CD8-positive, alpha-beta memory T cell (primary cell): ENCODE measurements at regions of chr4 and their contacts with region 1.

Region 1: DNA sequence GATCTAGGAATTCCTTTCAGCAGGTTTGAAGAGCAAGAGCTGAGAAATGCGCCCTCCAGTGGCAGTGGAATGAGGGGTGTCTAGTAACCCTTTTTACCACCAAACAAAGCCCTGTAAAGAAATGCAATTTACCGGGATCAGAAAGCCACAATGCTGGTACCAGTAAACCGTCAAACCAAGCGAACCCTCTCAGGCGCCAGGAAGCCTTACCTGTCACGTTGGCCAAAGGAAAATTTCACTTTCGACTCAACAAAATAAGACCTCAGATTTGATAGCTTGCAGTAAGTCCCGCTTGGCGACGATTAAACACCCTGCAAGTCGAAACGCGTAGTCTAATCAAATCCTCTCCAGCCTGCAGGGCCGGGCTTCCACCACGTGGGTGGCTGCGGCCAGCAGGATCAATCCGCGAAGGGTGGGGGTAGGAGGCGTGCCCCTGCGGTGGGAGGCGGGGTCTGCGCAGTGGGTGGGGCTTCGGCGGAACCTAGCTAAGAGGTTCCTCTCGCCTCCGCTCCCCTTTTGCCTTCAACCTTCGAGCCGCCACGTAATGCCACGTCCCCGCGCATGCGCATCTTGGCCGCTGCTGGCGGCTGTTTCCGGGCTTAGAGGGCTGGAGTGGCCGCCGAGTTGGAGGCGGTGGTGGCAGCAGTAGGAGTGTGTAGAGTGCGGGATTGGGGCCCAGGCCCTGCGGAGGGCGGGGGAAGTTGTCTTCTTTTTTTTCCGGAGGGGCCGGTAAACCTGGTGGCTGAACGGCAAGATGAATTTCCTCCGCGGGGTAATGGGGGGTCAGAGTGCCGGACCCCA is at the start of gene USO1:
- DNase-seq: peak; percentile 98 to 100 (median 99)
- H3K4me3 ChIP-seq: peak within 1 kb of the TSS; percentile 69
- H3K4me3 Mint-ChIP-seq: peak within 1 kb of the TSS; percentile 93 to 100 (median 98)
- H3K27ac ChIP-seq: peak within 1 kb of the TSS; percentile 94
- H3K27ac Mint-ChIP-seq: peak within 1 kb of the TSS; percentile 92 to 100 (median 98)
- H3K4me1 ChIP-seq: peaks cover 37% of the 10 kb centered on the region
- H3K4me1 Mint-ChIP-seq: peaks cover 48 to 68% (median 61%) of the 10 kb centered on the region in 3 donors
- H3K27me3 ChIP-seq: no peaks in the 10 kb centered on the region
- H3K27me3 Mint-ChIP-seq: peaks cover 0 to 4% of the 10 kb centered on the region in 2 donors
- total RNA-seq, gene USO1: 39.9 to 41.5 TPM

Region 2: DNA sequence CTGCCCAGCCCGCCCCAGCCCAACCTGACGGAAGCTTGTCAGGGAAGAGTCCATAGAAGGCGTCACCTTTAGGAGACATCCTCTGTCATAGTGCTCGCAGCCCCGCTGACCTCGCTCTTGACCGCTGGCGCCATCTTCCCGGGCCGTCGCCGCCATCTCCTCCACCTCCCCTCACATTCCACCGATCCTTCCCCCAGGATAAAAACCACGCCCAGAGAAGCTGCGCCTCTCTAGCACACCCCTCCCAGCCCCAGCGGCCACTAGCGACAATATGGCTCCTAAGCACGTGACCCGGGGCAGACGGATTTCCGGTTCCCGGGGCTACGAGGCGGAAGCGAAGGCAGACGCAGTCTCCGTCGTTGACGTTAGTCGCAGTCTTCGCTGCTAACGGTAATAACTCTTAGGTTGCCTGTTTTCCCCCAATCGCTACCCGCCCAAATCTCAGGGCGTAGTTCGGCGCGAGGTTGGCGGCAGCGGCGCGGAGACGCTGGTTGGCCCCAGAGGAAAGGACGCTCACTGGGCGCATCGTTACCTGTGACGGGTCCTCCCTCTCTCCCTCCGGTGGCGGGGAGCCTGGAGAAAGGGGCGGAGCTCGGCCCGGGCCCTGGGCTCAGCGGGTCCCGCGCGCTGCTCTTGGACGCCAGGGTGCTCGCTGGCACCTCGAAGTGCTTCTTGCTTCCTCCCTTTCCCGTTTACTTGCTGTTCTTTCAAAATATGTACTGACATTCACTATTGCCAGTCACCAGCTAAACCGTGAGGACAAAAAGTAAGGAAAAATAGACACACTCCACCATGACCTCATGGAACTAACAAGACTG is 209.9 kb before region 1 on chr4 and contains the starts of genes RCHY1 and THAP6:
- CTCF ChIA-PET with region 1: interaction called, 10 read pairs
- POLR2A ChIA-PET with region 1: interaction called, 12 read pairs
- DNase-seq: peak; percentile 91 to 95 (median 94)
- H3K4me3 ChIP-seq: peak within 1 kb of the TSS; percentile 92
- H3K4me3 Mint-ChIP-seq: no peak within 1 kb of the TSS
- H3K27ac ChIP-seq: peak within 1 kb of the TSS; percentile 91
- H3K27ac Mint-ChIP-seq: peak within 1 kb of the TSS in 2 of 8 donors; percentile 98 to 100
- H3K4me1 ChIP-seq: peaks cover 68% of the 10 kb centered on the region
- H3K4me1 Mint-ChIP-seq: peaks cover 44 to 51% (median 49%) of the 10 kb centered on the region in 3 donors
- H3K27me3 ChIP-seq: no peaks in the 10 kb centered on the region
- H3K27me3 Mint-ChIP-seq: peaks cover 0 to 1% of the 10 kb centered on the region in 2 donors
- total RNA-seq, gene RCHY1: 27.9 to 31.7 TPM
- total RNA-seq, gene THAP6: 22.7 to 23.2 TPM

Region 3: DNA sequence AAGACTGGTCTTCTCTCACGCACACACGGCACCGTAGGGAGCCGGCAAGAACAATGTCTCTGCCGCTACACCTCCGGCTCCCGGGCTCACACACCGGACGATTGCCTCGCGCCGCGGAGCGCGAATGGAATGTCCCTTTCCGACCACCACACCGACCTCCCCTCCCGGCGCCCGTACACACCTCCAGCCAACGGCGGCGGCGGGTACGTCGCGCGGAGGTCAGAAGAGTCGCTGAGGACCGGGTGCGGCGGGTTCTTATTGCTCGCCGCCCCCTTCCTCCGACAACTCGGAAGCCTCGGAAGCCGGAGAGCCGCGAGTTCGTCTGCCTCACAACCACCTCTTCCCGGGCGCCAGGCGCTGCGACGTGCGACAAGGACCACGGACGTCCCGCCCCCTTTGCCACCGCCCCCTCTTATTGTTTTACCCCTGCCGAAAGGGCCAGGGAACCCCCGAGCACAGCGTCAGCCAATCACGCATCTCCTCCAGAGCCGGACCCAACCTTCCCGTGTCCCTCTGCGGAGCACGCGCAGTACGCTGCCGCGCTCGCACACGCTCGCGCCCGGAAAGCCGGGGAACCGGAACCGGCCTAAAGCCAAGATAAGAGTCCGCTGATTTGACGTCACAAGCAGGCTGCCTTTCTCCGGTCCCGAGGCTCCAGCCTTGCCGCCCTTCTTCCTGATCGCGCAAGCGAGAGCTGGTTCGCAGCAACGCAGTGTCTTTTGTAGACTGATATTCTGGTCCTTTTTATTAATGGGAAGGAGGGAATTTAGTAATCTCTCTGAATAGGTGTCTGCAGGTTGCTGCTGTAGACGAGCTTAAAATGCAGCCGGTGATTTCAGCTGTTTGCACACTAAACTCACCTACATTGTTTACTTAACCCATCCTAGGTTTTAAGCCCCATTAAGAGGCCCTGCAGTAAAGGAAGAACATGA is 51.0 kb before region 1 on chr4 and contains the start of gene G3BP2:
- CTCF ChIA-PET with region 1: interaction called, 50 read pairs
- POLR2A ChIA-PET with region 1: interaction called, 54 read pairs
- DNase-seq: peak; percentile 96 to 99 (median 97)
- H3K4me3 ChIP-seq: peak within 1 kb of the TSS; percentile 91
- H3K4me3 Mint-ChIP-seq: peak within 1 kb of the TSS; percentile 89 to 99 (median 98)
- H3K27ac ChIP-seq: peak within 1 kb of the TSS; percentile 98
- H3K27ac Mint-ChIP-seq: peak within 1 kb of the TSS; percentile 97 to 99 (median 99)
- H3K4me1 ChIP-seq: peaks cover 46% of the 10 kb centered on the region
- H3K4me1 Mint-ChIP-seq: peaks cover 41 to 49% (median 49%) of the 10 kb centered on the region in 3 donors
- H3K27me3 ChIP-seq: no peaks in the 10 kb centered on the region
- H3K27me3 Mint-ChIP-seq: peaks cover 0 to 3% of the 10 kb centered on the region in 2 donors
- total RNA-seq, gene G3BP2: 189 to 195 TPM

Region 4: GRCh38 chr4:75683482-75684155 is 40.6 kb before region 1 on chr4:
- CTCF ChIA-PET with region 1: interaction called, 10 read pairs
- POLR2A ChIA-PET with region 1: interaction called, 4 read pairs
- DNase-seq: no peak
- H3K4me3 ChIP-seq: no peak overlapping the region
- H3K4me3 Mint-ChIP-seq: peak overlapping the region in 2 of 7 donors; percentile 24 to 37
- H3K27ac ChIP-seq: no peak overlapping the region
- H3K27ac Mint-ChIP-seq: peak overlapping the region in 6 of 8 donors; percentile 67 to 94 (median 86)
- H3K4me1 ChIP-seq: peaks cover 24% of the 10 kb centered on the region
- H3K4me1 Mint-ChIP-seq: peaks cover 35 to 48% (median 39%) of the 10 kb centered on the region in 3 donors
- H3K27me3 ChIP-seq: no peaks in the 10 kb centered on the region
- H3K27me3 Mint-ChIP-seq: no peaks in the 10 kb centered on the region

Region 5: GRCh38 chr4:75708218-75708691 is 16.0 kb before region 1 on chr4:
- CTCF ChIA-PET with region 1: interaction called, 13 read pairs
- POLR2A ChIA-PET with region 1: interaction called, 4 read pairs
- DNase-seq: peak; percentile 10 to 69 (median 52)
- H3K4me3 ChIP-seq: no peak overlapping the region
- H3K4me3 Mint-ChIP-seq: no peak overlapping the region
- H3K27ac ChIP-seq: no peak overlapping the region
- H3K27ac Mint-ChIP-seq: peak overlapping the region in 5 of 8 donors; percentile 29 to 74 (median 56)
- H3K4me1 ChIP-seq: no peaks in the 10 kb centered on the region
- H3K4me1 Mint-ChIP-seq: peaks cover 0 to 10% (median 0%) of the 10 kb centered on the region in 3 donors
- H3K27me3 ChIP-seq: no peaks in the 10 kb centered on the region
- H3K27me3 Mint-ChIP-seq: no peaks in the 10 kb centered on the region

Region 6: GRCh38 chr4:75714011-75714410 is 10.3 kb before region 1 on chr4:
- CTCF ChIA-PET with region 1: interaction called, 13 read pairs
- POLR2A ChIA-PET with region 1: no interaction called
- DNase-seq: no peak
- H3K4me3 ChIP-seq: no peak overlapping the region
- H3K4me3 Mint-ChIP-seq: no peak overlapping the region
- H3K27ac ChIP-seq: no peak overlapping the region
- H3K27ac Mint-ChIP-seq: peak overlapping the region in 1 of 8 donors; percentile 19
- H3K4me1 ChIP-seq: no peaks in the 10 kb centered on the region
- H3K4me1 Mint-ChIP-seq: peaks cover 0 to 5% (median 3%) of the 10 kb centered on the region in 3 donors
- H3K27me3 ChIP-seq: no peaks in the 10 kb centered on the region
- H3K27me3 Mint-ChIP-seq: no peaks in the 10 kb centered on the region

Region 7: GRCh38 chr4:75963558-75963957 is 239.3 kb after region 1 on chr4:
- CTCF ChIA-PET with region 1: no interaction called
- POLR2A ChIA-PET with region 1: no interaction called
- DNase-seq: no peak
- H3K4me3 ChIP-seq: no peak overlapping the region
- H3K4me3 Mint-ChIP-seq: no peak overlapping the region
- H3K27ac ChIP-seq: no peak overlapping the region
- H3K27ac Mint-ChIP-seq: peak overlapping the region in 2 of 8 donors; percentile 17 to 29
- H3K4me1 ChIP-seq: no peaks in the 10 kb centered on the region
- H3K4me1 Mint-ChIP-seq: no peaks in the 10 kb centered on the region
- H3K27me3 ChIP-seq: no peaks in the 10 kb centered on the region
- H3K27me3 Mint-ChIP-seq: no peaks in the 10 kb centered on the region